ENCODE measurements at regions of chr16 and their contacts with region 1.

Region 1: DNA sequence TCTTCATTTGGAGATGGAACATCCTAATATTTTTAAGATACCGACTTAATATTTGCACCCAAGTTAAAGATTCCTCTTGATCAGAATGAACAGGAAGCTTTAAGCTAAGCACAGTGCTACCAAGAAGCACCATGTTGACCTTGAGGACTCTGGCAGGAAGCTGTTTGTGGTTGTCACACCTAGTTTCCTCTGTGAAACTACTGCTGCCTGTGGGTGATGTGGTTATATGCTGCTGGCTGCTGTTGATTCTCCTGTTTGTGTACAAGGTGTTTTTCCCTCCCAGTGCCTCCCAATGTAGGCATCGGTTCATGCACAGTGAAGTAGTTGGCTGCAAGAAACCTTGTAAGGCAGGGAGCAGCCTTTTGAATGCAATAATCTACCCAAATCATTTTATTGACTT is 23.4 kb downstream of the RBL2 start:
- DNase-seq: peak; percentile 81
- H3K4me3 Mint-ChIP-seq: peak overlapping the region; percentile 55
- H3K27ac Mint-ChIP-seq: peak overlapping the region; percentile 88
- H3K4me1 Mint-ChIP-seq: peaks cover 78% of the 10 kb centered on the region
- H3K27me3 Mint-ChIP-seq: no peaks in the 10 kb centered on the region

Region 2: DNA sequence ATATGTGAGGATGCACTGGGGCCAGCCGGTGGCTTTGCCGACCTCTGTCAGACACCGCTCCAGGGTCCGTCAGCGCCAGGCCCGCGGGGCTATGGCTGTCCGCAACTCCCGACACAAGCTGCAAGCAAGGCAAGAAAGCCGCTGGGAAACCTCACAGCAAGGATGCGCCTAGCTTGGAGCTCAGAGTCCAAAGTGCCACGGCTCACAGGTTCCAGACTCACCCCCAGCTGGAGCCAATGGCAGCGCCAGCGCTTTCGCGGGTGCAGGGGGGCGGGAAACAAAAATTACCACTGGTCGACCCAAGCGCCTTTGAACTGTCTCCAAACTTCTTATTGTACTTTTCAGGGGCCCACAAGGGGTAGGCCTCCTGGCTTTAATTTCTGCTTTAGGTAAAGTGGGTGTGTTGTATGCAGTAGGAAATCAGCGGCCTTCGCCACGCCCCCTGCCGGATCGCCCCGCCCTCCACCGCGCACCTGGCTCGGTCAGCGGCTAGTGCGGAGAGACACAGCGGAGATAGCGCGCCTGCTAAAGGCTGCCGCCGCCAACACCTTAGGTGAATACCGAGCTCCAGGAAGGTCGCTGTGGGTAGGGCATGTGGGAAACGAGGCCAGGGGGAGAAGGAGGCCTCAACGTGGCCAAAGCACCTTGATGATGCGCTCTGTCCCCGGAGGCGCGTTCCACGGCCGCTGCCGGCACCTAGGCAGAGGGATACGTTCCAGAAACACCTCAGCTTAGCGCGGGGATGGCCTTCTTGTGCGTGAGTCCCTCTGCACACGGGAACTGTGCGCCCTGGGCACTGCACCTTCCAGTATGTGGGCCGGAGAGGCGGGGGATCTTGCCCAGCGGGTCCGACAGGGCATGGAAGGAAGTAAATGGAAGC is 84.4 kb before region 1 on chr16:
- intact Hi-C with region 1: loop called (anchors 10 kb)
- DNase-seq: peak; percentile 65
- H3K4me3 Mint-ChIP-seq: peak overlapping the region; percentile 78
- H3K27ac Mint-ChIP-seq: no peak overlapping the region
- H3K4me1 Mint-ChIP-seq: peaks cover 14% of the 10 kb centered on the region
- H3K27me3 Mint-ChIP-seq: peaks cover 26% of the 10 kb centered on the region

Region 3: DNA sequence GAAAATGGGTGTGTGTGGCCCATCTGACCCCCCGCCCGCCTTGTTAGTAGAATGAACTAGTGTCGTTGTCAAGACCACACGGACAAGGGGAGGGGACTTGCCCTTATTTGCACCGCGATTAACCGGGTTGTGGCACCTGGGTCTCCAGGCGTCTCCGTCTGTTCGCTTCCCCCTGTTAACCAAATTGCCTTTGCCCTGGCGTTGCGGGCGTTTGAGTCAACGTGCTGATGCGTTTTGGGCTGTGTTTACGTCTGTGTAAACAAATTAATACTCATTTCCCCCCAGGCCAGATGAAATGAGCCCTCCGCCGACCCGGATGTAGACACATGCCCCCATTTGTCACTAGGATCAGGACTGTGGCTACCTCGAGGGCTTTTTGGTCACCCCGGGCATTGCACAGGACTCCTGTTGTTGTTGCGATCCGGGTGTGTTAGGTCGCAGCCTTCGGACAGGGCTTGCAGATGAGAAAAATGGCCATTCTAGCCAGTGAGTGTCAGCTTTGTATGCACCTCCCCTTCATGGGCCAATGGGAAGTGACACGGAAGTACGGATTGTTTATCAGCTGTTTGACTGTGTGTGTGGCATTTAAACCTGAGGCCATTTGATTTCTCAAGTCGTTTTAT is 22.5 kb before region 1 on chr16:
- intact Hi-C with region 1: loop called (anchors 1 kb)
- DNase-seq: peak; percentile 63
- H3K4me3 Mint-ChIP-seq: peak overlapping the region; percentile 86
- H3K27ac Mint-ChIP-seq: peak overlapping the region; percentile 92
- H3K4me1 Mint-ChIP-seq: peaks cover 37% of the 10 kb centered on the region
- H3K27me3 Mint-ChIP-seq: no peaks in the 10 kb centered on the region

Region 4: GRCh38 chr16:53476867-53477266 is 19.2 kb after region 1 on chr16:
- intact Hi-C with region 1: loop called (anchors 2 kb)
- DNase-seq: no peak
- H3K4me3 Mint-ChIP-seq: no peak overlapping the region
- H3K27ac Mint-ChIP-seq: peak overlapping the region; percentile 64
- H3K4me1 Mint-ChIP-seq: peaks cover 30% of the 10 kb centered on the region
- H3K27me3 Mint-ChIP-seq: no peaks in the 10 kb centered on the region

Region 5: DNA sequence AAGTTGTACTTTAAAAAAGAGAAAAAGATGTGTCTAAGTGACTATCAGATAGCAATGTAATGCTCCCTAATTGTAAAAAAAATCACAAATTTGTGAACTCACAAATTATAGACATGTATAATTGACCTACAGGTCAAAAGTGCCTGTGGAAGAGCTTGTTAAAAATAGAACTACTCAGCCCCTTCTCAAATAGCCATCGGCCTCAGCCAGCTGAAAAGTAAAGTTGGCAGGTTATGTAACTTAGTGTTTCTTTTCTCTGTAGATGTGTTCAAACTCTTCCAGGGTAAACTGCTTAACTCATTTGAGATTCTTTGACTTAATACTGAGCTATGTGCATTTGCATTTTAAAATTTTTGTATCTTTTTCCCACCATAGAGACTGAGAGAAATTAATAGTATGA is 32.1 kb after region 1 on chr16:
- intact Hi-C with region 1: no loop called
- DNase-seq: no peak
- H3K4me3 Mint-ChIP-seq: no peak overlapping the region
- H3K27ac Mint-ChIP-seq: no peak overlapping the region
- H3K4me1 Mint-ChIP-seq: peaks cover 4% of the 10 kb centered on the region
- H3K27me3 Mint-ChIP-seq: no peaks in the 10 kb centered on the region

Region 6: DNA sequence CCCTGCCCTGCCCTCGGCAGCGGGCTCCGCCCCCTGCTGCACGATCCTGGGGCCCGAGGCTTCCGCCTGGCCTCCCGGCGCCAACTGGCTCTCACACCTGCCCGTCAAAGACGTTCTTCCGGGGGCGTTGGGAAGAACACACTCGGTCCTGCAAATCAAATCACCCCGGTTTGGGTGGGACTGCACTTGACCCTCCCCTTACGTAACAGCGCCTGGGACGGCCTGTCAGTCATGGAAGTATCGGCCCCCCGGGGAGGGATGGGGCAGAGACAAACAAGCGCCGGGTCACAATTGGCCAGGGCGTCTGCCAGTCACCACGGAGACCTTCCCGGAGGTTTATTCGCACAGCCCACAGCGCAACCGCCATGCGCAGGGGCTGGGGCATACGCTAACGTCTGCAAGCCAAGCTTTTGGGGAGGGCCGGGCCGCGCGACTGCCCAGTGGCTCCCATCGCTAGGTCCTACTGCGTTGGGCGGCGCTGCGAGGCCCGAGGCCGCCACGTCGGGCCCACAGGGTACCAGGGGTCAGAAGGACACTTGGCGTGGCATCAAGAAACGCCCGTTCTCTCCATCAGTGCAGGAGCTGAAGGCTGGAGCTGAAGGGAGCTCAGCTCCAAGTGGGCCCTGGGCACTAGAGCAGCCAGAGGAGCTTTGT is 45.7 kb after region 1 on chr16:
- intact Hi-C with region 1: loop called (anchors 1 kb)
- DNase-seq: peak; percentile 100
- H3K4me3 Mint-ChIP-seq: peak overlapping the region; percentile 88
- H3K27ac Mint-ChIP-seq: peak overlapping the region; percentile 91
- H3K4me1 Mint-ChIP-seq: peaks cover 45% of the 10 kb centered on the region
- H3K27me3 Mint-ChIP-seq: no peaks in the 10 kb centered on the region

Region 7: DNA sequence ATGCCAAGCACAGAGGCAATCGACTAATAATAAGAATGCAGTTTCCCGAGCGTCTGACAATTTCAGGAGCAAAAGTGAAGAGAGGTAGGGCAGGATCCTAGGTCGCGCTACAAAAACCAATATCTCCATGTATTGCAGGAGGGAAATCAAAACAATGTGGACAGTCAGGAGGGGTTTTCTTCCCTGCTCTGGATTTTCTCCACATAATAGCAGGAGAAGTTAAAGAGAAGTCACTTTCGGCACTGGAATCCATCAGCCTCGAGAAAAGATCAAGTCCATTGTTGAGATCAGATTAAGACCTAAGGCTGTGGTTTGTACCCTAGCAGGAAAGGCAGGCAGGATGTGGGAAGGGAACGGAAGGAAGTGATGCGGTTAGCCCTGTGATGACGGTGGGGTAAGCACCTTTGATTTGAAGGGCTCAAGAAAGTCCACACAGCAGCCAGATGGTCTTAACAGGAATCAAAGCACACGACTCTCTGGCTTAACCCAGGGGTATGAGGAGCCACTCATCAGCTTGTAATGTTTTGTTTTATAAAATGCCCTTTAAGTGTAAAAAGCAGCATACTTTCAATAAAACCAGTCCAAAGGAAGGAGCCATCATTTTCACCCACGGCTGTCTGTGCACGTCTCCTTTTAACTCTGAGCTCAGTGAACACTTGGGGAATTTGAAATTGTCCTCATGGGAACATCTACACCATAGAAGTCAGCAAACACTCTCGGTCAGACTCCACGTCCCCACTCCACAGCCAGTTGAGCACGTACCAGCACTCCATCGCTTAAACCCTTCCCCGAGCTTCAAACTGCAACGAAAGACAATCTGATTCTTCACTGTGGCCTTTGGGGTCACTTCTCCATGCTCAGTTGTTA is 61.1 kb after region 1 on chr16:
- intact Hi-C with region 1: loop called (anchors 1 kb)
- DNase-seq: peak; percentile 83
- H3K4me3 Mint-ChIP-seq: peak overlapping the region; percentile 66
- H3K27ac Mint-ChIP-seq: peak overlapping the region; percentile 62
- H3K4me1 Mint-ChIP-seq: peaks cover 47% of the 10 kb centered on the region
- H3K27me3 Mint-ChIP-seq: no peaks in the 10 kb centered on the region

Region 8: DNA sequence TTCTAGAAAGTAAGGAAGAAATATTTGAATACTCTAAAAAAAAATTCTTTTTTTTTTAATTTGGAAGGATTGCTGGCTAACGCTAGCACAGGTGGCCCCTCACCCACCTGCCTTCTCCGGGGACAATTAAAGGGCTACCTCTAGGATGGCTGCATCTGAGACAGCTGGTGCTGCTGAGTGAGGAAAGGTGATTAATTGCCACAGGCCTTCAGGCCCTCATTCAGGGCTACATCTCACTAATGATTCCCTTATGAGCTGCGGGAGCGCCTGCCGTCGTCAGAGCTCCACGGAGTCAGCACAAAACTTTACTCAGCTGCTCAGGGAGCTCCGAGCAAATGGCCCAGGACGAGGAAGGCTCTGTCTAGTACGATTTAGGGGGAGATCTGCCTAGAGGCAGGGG is 72.4 kb after region 1 on chr16:
- intact Hi-C with region 1: loop called (anchors 2 kb)
- DNase-seq: no peak
- H3K4me3 Mint-ChIP-seq: no peak overlapping the region
- H3K27ac Mint-ChIP-seq: no peak overlapping the region
- H3K4me1 Mint-ChIP-seq: peaks cover 12% of the 10 kb centered on the region
- H3K27me3 Mint-ChIP-seq: no peaks in the 10 kb centered on the region

Measured in activated T-helper 2 cell treated with anti-CD3 and anti-CD28 coated beads, Interferon-gamma antibody, Interleukin-2, Interleukin-4, amounts not matched to agents 10 μg/mL and 5 μg/mL and 100 μg/mL, durations not matched to agents 14 hours and 24 hours and 36 hours (primary cell).